Activated naive CD4-positive, alpha-beta T cell treated with anti-CD3 and anti-CD28 coated beads, Interleukin-2, amount 10 ng/mL, durations not matched to agents 7 days and 5 days (primary cell): ENCODE measurements at regions of chr2 and their contacts with region 1.

Region 1: DNA sequence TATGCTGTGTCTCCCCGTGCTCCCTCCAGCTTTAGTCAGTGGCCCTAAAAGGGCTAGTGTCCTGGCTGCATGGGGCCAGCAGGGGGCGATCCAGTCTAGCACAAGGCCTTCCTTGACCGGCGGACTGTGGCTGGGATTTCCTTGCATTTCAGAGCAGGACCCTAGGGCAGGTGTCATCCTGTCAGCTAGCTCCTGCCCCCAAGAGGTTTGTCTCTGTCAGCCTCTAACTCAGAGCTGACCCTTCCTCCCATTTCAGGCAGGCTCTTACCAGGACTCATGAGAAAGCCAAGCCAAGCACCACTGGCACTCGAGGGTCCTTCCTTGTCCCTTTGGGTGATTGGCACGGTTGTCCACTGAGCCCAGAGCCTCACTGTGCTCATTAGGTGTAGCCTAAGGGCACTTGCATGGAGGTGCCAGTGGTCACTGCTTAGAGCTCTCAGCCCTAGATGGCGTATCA is 140.3 kb downstream of the RPIA start:
- DNase-seq: peak; percentile 63
- H3K4me3 Mint-ChIP-seq: no peak overlapping the region
- H3K27ac Mint-ChIP-seq: no peak overlapping the region
- H3K4me1 Mint-ChIP-seq: no peaks in the 10 kb centered on the region
- H3K27me3 Mint-ChIP-seq: no peaks in the 10 kb centered on the region

Region 2: DNA sequence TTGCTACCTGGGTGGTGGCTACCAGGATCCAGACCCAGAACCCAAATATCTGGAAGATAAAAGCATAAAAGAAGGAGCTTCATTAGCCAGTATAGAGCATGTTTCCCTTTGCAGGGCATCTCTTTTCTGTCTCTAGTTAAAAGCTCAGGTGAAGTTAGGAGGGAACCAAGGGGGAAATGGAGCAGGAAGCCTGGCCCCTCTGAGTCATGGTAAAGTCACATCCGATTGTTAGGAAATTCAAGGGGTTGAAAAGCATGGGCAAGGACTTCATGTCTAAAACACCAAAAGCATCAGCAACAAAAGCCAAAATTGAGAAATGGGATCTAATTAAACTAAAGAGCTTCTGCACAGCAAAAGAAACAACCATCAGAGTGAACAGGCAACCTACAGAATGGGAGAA is 13.4 kb before region 1 on chr2:
- CTCF ChIA-PET with region 1: interaction called, 13 read pairs
- DNase-seq: no peak
- H3K4me3 Mint-ChIP-seq: no peak overlapping the region
- H3K27ac Mint-ChIP-seq: no peak overlapping the region
- H3K4me1 Mint-ChIP-seq: no peaks in the 10 kb centered on the region
- H3K27me3 Mint-ChIP-seq: peaks cover 9% of the 10 kb centered on the region

Region 3: DNA sequence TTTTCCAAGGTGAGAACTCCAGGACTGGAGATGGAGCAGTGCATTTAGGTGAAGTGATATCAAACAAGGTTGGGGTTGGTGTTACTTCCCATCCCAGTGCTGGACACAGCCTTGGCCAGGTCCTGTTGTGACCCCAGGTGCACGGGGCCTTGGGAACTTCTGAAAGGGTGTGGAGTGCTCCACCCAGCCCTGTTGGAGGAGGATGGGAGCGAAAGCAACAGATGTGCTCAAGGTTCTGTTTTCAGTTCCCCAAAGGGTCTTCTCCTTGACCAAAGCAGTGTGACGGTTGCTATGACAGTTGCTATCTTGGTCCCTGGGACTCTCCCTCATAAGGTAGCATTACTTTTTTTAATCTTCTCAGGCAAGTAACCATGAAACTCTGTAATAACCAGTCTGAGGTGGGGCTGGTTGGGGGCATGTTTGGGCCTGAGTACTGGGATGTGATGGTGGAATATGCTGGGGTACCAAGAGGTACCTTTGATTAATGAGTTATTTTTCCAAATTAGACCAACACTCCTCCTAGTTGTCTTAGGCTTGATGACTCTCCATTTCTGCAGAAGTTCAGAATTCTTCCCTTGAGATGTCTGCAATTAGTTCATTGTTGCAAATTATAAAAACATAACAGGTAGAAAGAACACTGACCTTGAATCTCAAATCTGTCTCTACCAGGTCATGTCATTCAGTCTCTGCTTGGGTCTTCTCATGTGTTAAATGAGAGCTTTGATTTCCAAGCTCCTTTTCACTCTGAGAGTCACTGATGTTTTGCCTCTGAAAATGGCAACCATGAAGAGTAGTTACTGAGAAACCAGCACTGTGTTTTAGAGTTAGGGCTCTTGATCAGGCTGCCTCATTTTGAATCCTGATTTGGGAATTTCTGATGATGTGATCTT is 14.2 kb after region 1 on chr2:
- CTCF ChIA-PET with region 1: interaction called, 12 read pairs
- DNase-seq: no peak
- H3K4me3 Mint-ChIP-seq: no peak overlapping the region
- H3K27ac Mint-ChIP-seq: no peak overlapping the region
- H3K4me1 Mint-ChIP-seq: no peaks in the 10 kb centered on the region
- H3K27me3 Mint-ChIP-seq: peaks cover 30% of the 10 kb centered on the region